ENCODE measurements at regions of chr15 and their contacts with region 1.

Region 1: DNA sequence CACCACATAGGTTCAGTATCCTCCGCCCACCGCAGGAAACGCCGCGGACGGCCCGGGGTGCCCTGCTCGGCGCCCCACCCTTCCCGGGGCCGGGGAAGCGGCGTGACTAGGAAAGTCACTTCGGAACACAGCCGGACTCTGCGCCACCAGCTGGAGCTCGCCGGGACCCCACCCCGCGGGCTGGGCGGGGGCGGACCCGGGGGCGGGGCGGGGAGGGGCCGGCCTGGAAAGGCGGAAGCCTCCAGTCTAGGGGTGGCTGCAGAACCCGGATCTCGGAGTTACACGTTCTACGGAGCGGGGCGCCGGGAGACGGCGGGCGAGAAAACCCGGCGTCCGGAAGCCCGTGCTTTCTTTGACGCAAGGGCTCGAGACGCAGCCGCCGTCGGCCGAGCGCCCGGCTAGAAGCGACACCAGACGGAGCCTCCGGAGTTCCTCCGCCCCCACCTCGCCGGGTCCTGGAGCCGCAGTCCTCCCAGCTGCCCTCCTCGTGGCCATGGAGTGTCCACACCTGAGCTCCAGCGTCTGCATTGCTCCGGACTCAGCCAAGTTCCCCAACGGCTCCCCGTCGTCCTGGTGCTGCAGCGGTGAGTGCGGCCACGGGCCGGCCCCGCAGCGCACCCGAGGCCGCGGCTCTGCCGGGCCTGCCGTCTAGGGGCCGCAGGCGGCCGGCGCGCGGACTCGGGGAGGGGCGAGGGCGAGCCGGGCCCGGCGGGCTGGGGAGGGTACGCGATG is at the start of gene USP3:
- DNase-seq: peak; percentile 86 to 95 (median 92)
- H3K4me3 ChIP-seq: peak within 1 kb of the TSS; percentile 90
- H3K4me3 Mint-ChIP-seq: peak within 1 kb of the TSS; percentile 94 to 99 (median 98)
- H3K27ac ChIP-seq: peak within 1 kb of the TSS; percentile 96
- H3K27ac Mint-ChIP-seq: peak within 1 kb of the TSS; percentile 96 to 100 (median 100)
- H3K4me1 ChIP-seq: peaks cover 80% of the 10 kb centered on the region
- H3K4me1 Mint-ChIP-seq: peaks cover 78 to 81% (median 78%) of the 10 kb centered on the region in 3 donors
- H3K27me3 ChIP-seq: no peaks in the 10 kb centered on the region
- H3K27me3 Mint-ChIP-seq: no peaks in the 10 kb centered on the region
- total RNA-seq, gene USP3: 36.6 to 38.0 TPM

Region 2: DNA sequence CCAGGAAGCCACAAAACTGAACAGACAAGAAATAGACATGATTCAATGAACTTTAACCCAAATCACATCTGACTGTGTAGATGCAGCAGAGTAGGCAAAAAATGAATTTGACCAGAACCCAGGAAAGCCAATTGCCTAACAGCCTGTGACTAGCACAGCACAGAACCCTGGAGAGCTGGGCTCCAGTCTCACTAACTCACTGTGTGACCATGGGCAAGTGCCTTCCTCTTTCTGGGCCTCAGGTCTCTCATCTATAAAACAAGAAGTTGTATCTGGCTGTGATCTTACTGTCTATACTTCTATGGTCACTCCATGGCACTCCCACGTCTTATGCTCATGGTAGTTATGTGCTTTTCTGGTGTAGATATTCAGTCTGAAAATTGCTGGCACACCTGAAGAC is 48.2 kb before region 1 on chr15:
- CTCF ChIA-PET with region 1: no interaction called
- POLR2A ChIA-PET with region 1: no interaction called
- DNase-seq: no peak
- H3K4me3 ChIP-seq: no peak overlapping the region
- H3K4me3 Mint-ChIP-seq: no peak overlapping the region
- H3K27ac ChIP-seq: no peak overlapping the region
- H3K27ac Mint-ChIP-seq: no peak overlapping the region
- H3K4me1 ChIP-seq: no peaks in the 10 kb centered on the region
- H3K4me1 Mint-ChIP-seq: no peaks in the 10 kb centered on the region
- H3K27me3 ChIP-seq: no peaks in the 10 kb centered on the region
- H3K27me3 Mint-ChIP-seq: peaks cover 2 to 5% of the 10 kb centered on the region in 2 donors

Region 3: DNA sequence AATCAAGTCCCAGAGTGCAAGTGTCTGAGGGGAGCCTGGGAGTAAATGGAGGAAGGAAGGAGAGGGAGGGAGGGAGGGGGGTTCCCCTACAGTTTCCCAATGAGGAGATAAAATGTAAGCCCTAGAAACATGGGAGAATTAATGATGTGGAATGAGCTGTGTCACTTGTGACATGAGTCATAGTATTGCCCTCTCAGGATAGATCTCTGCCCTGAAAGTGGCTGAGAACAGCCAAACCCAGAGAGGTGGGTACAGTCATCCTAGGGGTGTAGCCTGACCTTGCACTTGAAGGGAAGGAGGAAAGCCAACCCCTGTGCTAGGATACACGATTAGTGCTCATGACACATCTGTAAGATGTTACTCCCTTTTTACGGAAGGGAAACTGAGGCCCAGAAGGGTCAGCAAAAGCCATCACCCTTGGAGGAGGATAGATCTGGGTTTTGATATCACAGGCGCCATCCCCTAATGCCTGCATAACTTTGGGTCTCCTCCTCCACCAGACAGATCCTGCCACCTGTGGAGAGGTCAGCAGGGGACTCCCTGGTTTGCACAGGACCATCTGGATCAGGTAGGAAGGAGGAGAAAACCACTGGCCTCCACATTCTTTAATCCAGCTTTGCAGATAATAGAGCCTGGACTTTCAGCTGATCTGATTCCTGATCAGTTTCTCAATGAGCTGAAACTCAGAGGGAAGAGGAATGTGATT is 23.2 kb before region 1 on chr15:
- CTCF ChIA-PET with region 1: interaction called, 115 read pairs
- POLR2A ChIA-PET with region 1: interaction called, 29 read pairs
- DNase-seq: no peak
- H3K4me3 ChIP-seq: no peak overlapping the region
- H3K4me3 Mint-ChIP-seq: peak overlapping the region in 2 of 7 donors; percentile 10 to 72
- H3K27ac ChIP-seq: no peak overlapping the region
- H3K27ac Mint-ChIP-seq: peak overlapping the region; percentile 90 to 100 (median 99)
- H3K4me1 ChIP-seq: peaks cover 80% of the 10 kb centered on the region
- H3K4me1 Mint-ChIP-seq: peaks cover 54 to 76% (median 75%) of the 10 kb centered on the region in 3 donors
- H3K27me3 ChIP-seq: no peaks in the 10 kb centered on the region
- H3K27me3 Mint-ChIP-seq: no peaks in the 10 kb centered on the region

Region 4: GRCh38 chr15:63487076-63487757 is 17.2 kb before region 1 on chr15:
- CTCF ChIA-PET with region 1: interaction called, 115 read pairs
- POLR2A ChIA-PET with region 1: interaction called, 33 read pairs
- DNase-seq: peak; percentile 78 to 91 (median 83)
- H3K4me3 ChIP-seq: no peak overlapping the region
- H3K4me3 Mint-ChIP-seq: peak overlapping the region in 6 of 7 donors; percentile 49 to 79 (median 67)
- H3K27ac ChIP-seq: no peak overlapping the region
- H3K27ac Mint-ChIP-seq: peak overlapping the region in 6 of 8 donors; percentile 78 to 92 (median 89)
- H3K4me1 ChIP-seq: peaks cover 60% of the 10 kb centered on the region
- H3K4me1 Mint-ChIP-seq: peaks cover 41 to 66% (median 66%) of the 10 kb centered on the region in 3 donors
- H3K27me3 ChIP-seq: no peaks in the 10 kb centered on the region
- H3K27me3 Mint-ChIP-seq: no peaks in the 10 kb centered on the region

Region 5: GRCh38 chr15:63514531-63514943 is 10.1 kb after region 1 on chr15:
- CTCF ChIA-PET with region 1: interaction called, 11 read pairs
- POLR2A ChIA-PET with region 1: interaction called, 19 read pairs
- DNase-seq: no peak
- H3K4me3 ChIP-seq: no peak overlapping the region
- H3K4me3 Mint-ChIP-seq: peak overlapping the region; percentile 14 to 60 (median 38)
- H3K27ac ChIP-seq: no peak overlapping the region
- H3K27ac Mint-ChIP-seq: peak overlapping the region in 7 of 8 donors; percentile 20 to 86 (median 72)
- H3K4me1 ChIP-seq: peaks cover 92% of the 10 kb centered on the region
- H3K4me1 Mint-ChIP-seq: peaks cover 88 to 100% (median 99%) of the 10 kb centered on the region in 3 donors
- H3K27me3 ChIP-seq: no peaks in the 10 kb centered on the region
- H3K27me3 Mint-ChIP-seq: no peaks in the 10 kb centered on the region

Region 6: GRCh38 chr15:63531586-63531985 is 27.2 kb after region 1 on chr15:
- CTCF ChIA-PET with region 1: interaction called, 11 read pairs
- POLR2A ChIA-PET with region 1: no interaction called
- DNase-seq: no peak
- H3K4me3 ChIP-seq: no peak overlapping the region
- H3K4me3 Mint-ChIP-seq: no peak overlapping the region
- H3K27ac ChIP-seq: no peak overlapping the region
- H3K27ac Mint-ChIP-seq: peak overlapping the region in 7 of 8 donors; percentile 12 to 55 (median 47)
- H3K4me1 ChIP-seq: peaks cover 66% of the 10 kb centered on the region
- H3K4me1 Mint-ChIP-seq: peaks cover 90 to 96% (median 95%) of the 10 kb centered on the region in 3 donors
- H3K27me3 ChIP-seq: no peaks in the 10 kb centered on the region
- H3K27me3 Mint-ChIP-seq: no peaks in the 10 kb centered on the region

Region 7: GRCh38 chr15:63600616-63601025 is 96.2 kb after region 1 on chr15:
- CTCF ChIA-PET with region 1: interaction called, 17 read pairs
- POLR2A ChIA-PET with region 1: interaction called, 36 read pairs
- DNase-seq: peak; percentile 84 to 94 (median 93)
- H3K4me3 ChIP-seq: peak overlapping the region; percentile 86
- H3K4me3 Mint-ChIP-seq: peak overlapping the region; percentile 88 to 100 (median 95)
- H3K27ac ChIP-seq: peak overlapping the region; percentile 84
- H3K27ac Mint-ChIP-seq: peak overlapping the region; percentile 91 to 99 (median 96)
- H3K4me1 ChIP-seq: peaks cover 32% of the 10 kb centered on the region
- H3K4me1 Mint-ChIP-seq: peaks cover 46 to 70% (median 48%) of the 10 kb centered on the region in 3 donors
- H3K27me3 ChIP-seq: no peaks in the 10 kb centered on the region
- H3K27me3 Mint-ChIP-seq: no peaks in the 10 kb centered on the region